ENCODE measurements at regions of chrX and their contacts with region 1.

Region 1: GRCh38 chrX:39808471-39808917 is 289.3 kb downstream of the BCOR start:
- DNase-seq: peak; percentile 80
- ATAC-seq: peak; percentile 88
- H3K4me3 ChIP-seq: no peak overlapping the region
- H3K27ac ChIP-seq: peak overlapping the region; percentile 70
- H3K4me1 ChIP-seq: peaks cover 6% of the 10 kb centered on the region
- H3K27me3 ChIP-seq: peaks cover 4% of the 10 kb centered on the region; the same call in 1 of the 2 replicates
- CTCF ChIP-seq: no peak
- POLR2A ChIP-seq: no peak
- RAD21 ChIP-seq: no peak

Region 2: GRCh38 chrX:39730662-39731397 is 77.7 kb before region 1 on chrX:
- CTCF ChIA-PET with region 1: no interaction called
- POLR2A ChIA-PET with region 1: no interaction called
- dilution Hi-C with region 1: no loop called
- in situ Hi-C with region 1: no loop called
- intact Hi-C with region 1: loop called (anchors 2 kb)
- DNase-seq: peak; percentile 88
- ATAC-seq: peak; percentile 81
- H3K4me3 ChIP-seq: no peak overlapping the region
- H3K27ac ChIP-seq: no peak overlapping the region
- H3K4me1 ChIP-seq: peaks cover 10% of the 10 kb centered on the region
- H3K27me3 ChIP-seq: peaks cover 21% of the 10 kb centered on the region
- CTCF ChIP-seq: peak; percentile 77
- POLR2A ChIP-seq: peak; percentile 43; the same call in 1 of the 2 replicates
- RAD21 ChIP-seq: peak; percentile 85